OCI-LY7 (cell line): ENCODE measurements at regions of chr4 and their contacts with region 1.

Region 1: DNA sequence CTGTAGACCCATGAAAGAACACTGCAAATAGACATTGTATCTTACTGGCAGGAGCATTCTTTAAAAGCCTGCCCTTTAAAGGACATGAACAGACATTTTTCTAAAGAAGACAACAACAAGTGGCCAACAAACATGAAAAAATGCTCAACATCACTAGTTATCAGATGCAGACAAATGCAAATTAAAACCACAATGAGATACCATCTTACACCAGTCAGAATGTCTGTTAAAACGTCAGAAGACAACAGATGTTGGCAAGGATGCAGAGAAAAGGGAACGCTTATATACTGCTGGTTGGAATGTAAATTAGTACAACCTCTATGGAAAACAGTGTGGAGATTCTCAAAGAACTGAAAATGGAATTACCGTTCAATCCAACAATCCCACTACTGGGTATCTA is 77.2 kb downstream of the ATP10D start:
- DNase-seq: no peak
- H3K4me3 ChIP-seq: no peak overlapping the region
- H3K27ac ChIP-seq: no peak overlapping the region
- H3K4me1 ChIP-seq: no peaks in the 10 kb centered on the region
- CTCF ChIP-seq: no peak

Region 2: GRCh38 chr4:47406408-47406807 is 155.9 kb before region 1 on chr4:
- CTCF ChIA-PET with region 1: no interaction called
- POLR2A ChIA-PET with region 1: no interaction called
- intact Hi-C with region 1: loop called (anchors 10 kb)
- DNase-seq: no peak
- H3K4me3 ChIP-seq: no peak overlapping the region
- H3K27ac ChIP-seq: no peak overlapping the region
- H3K4me1 ChIP-seq: no peaks in the 10 kb centered on the region
- CTCF ChIP-seq: no peak

Region 3: GRCh38 chr4:47463235-47463956 is 98.9 kb before region 1 on chr4 and contains the start of gene COMMD8:
- CTCF ChIA-PET with region 1: no interaction called
- POLR2A ChIA-PET with region 1: interaction called, 5 read pairs
- intact Hi-C with region 1: loop called (anchors 2 kb)
- DNase-seq: peak; percentile 99
- H3K4me3 ChIP-seq: peak within 1 kb of the TSS; percentile 84
- H3K27ac ChIP-seq: peak within 1 kb of the TSS; percentile 81
- H3K4me1 ChIP-seq: peaks cover 45% of the 10 kb centered on the region
- CTCF ChIP-seq: peak; percentile 46; the same call in 1 of the 2 replicates
- total RNA-seq, gene COMMD8: 25.8 and 29.1 TPM in 2 replicates

Region 4: GRCh38 chr4:47499700-47500099 is 62.6 kb before region 1 on chr4:
- CTCF ChIA-PET with region 1: no interaction called
- POLR2A ChIA-PET with region 1: interaction called, 3 read pairs
- intact Hi-C with region 1: loop called (anchors 5 kb)
- DNase-seq: peak; percentile 58
- H3K4me3 ChIP-seq: peak overlapping the region; percentile 7
- H3K27ac ChIP-seq: peak overlapping the region; percentile 35
- H3K4me1 ChIP-seq: peaks cover 22% of the 10 kb centered on the region
- CTCF ChIP-seq: no peak

Region 5: DNA sequence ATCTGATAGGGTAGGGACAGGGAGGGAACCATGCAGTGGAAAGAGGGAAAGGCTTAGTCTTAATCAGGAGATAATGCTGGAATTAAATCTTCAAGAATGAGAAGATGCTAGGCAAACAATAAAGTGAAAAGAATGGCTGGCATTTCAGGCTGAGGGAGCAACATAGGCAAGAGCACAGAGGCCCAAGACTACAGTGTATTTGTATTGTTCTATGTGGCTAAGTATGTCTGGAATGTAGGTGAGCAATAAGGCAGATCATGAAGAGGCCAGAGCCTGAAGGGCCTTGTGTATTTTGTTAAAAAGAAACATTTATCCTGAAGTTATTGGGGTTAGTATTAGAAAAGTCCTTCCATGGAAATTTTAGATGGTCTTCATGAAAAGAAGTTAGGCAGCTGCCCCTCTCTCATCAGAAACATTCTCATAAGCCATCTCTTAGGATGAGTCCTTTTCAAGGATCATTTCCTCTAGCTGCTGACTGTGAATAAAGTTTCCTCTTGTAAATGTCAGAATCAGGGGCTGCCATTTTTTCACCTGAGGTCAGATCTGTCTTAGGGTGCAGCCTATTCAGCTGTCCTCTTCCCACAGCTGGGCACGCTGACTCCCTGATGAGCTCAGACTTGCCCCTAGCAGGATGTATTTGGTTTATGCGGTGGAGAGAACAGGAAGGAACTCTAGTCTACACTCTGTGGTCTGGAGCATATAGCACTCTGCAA is 30.9 kb before region 1 on chr4:
- CTCF ChIA-PET with region 1: no interaction called
- POLR2A ChIA-PET with region 1: no interaction called
- intact Hi-C with region 1: no loop called
- DNase-seq: no peak
- H3K4me3 ChIP-seq: no peak overlapping the region
- H3K27ac ChIP-seq: no peak overlapping the region
- H3K4me1 ChIP-seq: no peaks in the 10 kb centered on the region
- CTCF ChIP-seq: no peak